Activated naive CD4-positive, alpha-beta T cell treated with anti-CD3 and anti-CD28 coated beads for 36 hours (primary cell): ENCODE measurements at regions of chr6 and their contacts with region 1.

Region 1: GRCh38 chr6:25042036-25042521 is 106.3 kb upstream of the RIPOR2 start:
- DNase-seq: peak; percentile 73
- H3K4me3 Mint-ChIP-seq: peak overlapping the region; percentile 92
- H3K27ac Mint-ChIP-seq: peak overlapping the region; percentile 97
- H3K4me1 Mint-ChIP-seq: peaks cover 66% of the 10 kb centered on the region
- H3K27me3 Mint-ChIP-seq: no peaks in the 10 kb centered on the region

Region 2: GRCh38 chr6:25006565-25007001 is 35.5 kb before region 1 on chr6:
- CTCF ChIA-PET with region 1: no interaction called
- intact Hi-C with region 1: loop called (anchors 2 kb)
- DNase-seq: peak; percentile 72
- H3K4me3 Mint-ChIP-seq: peak overlapping the region; percentile 31
- H3K27ac Mint-ChIP-seq: peak overlapping the region; percentile 68
- H3K4me1 Mint-ChIP-seq: peaks cover 80% of the 10 kb centered on the region
- H3K27me3 Mint-ChIP-seq: no peaks in the 10 kb centered on the region

Region 3: DNA sequence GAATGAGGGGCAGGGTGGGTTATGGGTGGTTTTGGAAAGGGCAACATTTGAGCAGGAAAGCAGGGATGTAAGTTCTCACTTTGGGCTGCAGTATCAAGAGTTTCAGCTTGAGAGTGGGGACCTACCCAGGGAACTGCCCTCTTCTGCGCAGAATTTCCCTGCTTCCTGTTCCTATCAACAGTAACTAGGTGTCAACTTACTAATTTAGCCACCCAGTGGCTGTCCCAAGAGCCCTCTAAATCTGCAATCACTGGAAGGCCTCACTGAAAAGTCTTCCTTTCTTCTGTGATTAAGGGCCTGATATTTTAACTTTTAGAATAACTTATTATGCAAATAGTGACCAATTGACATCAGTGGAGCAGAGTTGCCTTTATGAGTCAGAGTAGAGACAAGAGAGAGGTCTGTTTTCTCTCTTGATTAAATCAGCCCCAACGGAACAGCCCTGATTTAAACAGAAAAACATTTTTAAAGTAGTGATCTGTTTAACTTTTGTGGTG is 11.8 kb after region 1 on chr6:
- CTCF ChIA-PET with region 1: interaction called, 11 read pairs
- intact Hi-C with region 1: loop called (anchors 1 kb)
- DNase-seq: peak; percentile 68
- H3K4me3 Mint-ChIP-seq: no peak overlapping the region
- H3K27ac Mint-ChIP-seq: peak overlapping the region; percentile 83
- H3K4me1 Mint-ChIP-seq: peaks cover 79% of the 10 kb centered on the region
- H3K27me3 Mint-ChIP-seq: no peaks in the 10 kb centered on the region

Region 4: DNA sequence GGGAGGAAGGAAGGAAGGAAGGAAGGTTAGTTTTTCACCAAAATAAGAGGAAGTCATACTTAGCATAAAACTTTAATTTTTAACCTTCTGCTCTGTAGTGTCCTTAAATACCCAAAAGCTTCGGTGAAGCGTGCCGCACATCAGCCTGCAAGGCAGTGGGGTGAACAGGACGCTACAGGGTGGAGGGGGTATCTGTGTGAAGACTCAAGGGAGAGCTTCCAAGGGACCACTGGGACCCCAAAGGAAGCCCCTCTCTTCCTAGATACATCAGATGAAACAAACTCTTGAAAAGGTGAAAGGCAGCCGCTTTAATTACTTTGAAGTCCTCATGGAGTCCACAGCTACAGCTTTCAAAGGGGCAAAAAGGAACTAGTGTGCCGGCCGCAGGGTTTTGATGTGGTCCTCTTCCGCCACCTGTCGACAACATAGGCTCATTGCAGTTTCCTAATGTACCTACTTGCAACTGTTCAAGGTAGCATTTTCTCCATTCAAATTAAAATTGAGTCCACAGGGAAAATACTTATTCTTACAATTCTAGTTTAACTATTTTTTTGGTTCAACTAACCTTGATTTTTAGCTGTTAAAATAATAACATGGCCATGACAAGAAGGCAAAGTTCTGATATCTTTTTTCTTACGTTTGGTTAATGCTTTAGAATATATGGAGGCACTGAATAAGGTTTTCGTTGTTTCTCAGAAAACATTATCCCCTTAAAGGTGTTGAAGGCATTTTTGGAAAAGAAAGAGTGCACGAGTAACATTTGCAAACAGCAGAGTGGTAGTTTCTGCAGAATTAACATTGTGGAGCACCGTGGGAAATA is 28.7 kb after region 1 on chr6:
- CTCF ChIA-PET with region 1: interaction called, 15 read pairs
- intact Hi-C with region 1: loop called (anchors 1 kb)
- DNase-seq: peak; percentile 91
- H3K4me3 Mint-ChIP-seq: peak overlapping the region; percentile 38
- H3K27ac Mint-ChIP-seq: peak overlapping the region; percentile 70
- H3K4me1 Mint-ChIP-seq: peaks cover 10% of the 10 kb centered on the region
- H3K27me3 Mint-ChIP-seq: no peaks in the 10 kb centered on the region

Region 5: DNA sequence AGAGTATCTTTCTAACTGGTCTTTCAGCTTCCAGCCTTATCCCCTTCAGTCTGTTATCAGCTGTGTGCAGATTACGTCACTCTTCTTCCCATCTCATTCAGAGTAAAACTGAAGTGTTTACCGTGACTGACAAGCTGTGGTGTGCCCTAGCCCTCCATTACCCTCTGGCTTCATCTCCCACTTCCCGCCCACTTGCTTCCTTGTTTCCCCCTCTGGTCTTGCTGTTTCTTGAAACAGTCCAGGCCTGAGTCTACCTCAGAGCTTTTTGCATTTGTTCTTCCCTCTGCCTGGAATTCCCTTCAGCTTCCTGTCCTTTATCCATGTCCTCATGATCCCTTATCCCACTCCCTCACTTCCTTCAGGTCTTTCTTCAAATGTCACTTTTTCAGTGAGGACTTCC is 304.0 kb after region 1 on chr6:
- CTCF ChIA-PET with region 1: no interaction called
- intact Hi-C with region 1: no loop called
- DNase-seq: no peak
- H3K4me3 Mint-ChIP-seq: no peak overlapping the region
- H3K27ac Mint-ChIP-seq: no peak overlapping the region
- H3K4me1 Mint-ChIP-seq: peaks cover 9% of the 10 kb centered on the region
- H3K27me3 Mint-ChIP-seq: no peaks in the 10 kb centered on the region